ENCODE measurements at regions of chr16 and their contacts with region 1.

Region 1: GRCh38 chr16:29848420-29849297 is 14.4 kb downstream of the CDIPT start:
- H3K4me3 ChIP-seq: no peak overlapping the region
- H3K27ac ChIP-seq: no peak overlapping the region
- H3K4me1 ChIP-seq: no peaks in the 10 kb centered on the region
- CTCF ChIP-seq: peak; percentile 89

Region 2: DNA sequence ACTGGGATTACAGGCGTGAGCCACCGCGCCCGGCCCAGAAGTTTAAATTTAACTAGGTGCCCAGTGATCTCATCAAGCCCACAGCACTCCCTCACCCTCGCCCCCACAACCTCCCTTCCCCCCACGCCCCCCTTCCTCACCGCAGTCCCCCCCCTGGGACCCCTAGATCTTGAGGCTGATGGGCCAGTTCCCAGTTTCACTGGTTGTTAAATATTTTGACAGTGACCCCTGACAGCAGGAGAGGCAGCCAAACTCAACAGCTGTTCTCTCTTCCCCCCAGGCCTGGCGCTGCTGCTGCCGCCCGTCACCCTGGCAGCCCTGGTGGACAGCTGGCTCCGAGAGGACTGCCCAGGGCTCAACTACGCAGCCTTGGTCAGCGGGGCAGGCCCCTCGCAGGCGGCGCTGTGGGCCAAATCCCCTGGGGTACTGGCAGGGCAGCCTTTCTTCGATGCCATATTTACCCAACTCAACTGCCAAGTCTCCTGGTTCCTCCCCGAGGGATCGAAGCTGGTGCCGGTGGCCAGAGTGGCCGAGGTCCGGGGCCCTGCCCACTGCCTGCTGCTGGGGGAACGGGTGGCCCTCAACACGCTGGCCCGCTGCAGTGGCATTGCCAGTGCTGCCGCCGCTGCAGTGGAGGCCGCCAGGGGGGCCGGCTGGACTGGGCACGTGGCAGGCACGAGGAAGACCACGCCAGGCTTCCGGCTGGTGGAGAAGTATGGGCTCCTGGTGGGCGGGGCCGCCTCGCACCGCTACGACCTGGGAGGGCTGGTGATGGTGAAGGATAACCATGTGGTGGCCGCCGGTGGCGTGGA is 154.1 kb before region 1 on chr16:
- CTCF ChIA-PET with region 1: interaction called, 27 read pairs
- POLR2A ChIA-PET with region 1: no interaction called
- H3K4me3 ChIP-seq: no peak overlapping the region
- H3K27ac ChIP-seq: no peak overlapping the region
- H3K4me1 ChIP-seq: no peaks in the 10 kb centered on the region
- CTCF ChIP-seq: no peak

Region 3: DNA sequence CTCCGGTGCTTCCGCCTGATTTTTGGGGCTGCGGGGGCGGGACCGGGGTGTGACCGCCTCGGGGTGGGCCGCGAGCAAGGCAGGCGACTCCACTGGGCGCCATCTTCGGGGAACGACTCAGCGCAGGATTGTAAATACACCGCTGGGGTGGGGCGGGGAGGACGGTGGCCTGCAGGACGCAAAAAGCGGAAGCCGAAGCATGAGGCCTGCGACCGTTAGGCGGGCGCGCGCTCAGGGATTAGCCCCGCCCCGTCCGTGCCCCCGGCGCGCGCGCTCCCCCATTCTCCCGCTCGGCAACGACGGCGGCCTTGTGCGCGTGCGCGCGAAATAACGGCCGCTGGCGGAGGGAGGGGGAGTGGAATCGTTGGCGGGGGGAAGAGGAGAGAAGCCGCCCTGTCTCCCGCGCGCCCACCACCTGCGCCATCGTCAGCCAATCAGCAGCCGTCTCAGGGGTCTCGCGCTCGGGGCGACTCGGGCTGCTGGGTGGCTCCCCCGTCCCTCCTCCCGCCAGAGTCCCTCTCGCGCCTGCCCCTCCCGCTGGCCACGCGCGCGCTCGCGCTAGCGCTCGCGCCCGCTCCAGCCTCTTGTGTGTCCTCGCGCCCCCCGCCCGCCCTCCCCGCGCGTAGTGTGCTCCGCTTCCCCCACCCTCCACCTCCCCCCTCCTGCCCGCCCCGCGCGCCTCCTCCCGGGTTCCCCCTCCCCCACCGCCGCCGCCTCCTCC is 43.1 kb before region 1 on chr16:
- CTCF ChIA-PET with region 1: interaction called, 23 read pairs
- POLR2A ChIA-PET with region 1: interaction called, 8 read pairs
- H3K4me3 ChIP-seq: peak overlapping the region; percentile 53
- H3K27ac ChIP-seq: peak overlapping the region; percentile 100
- H3K4me1 ChIP-seq: peaks cover 13% of the 10 kb centered on the region
- CTCF ChIP-seq: peak; percentile 60

Region 4: GRCh38 chr16:29825145-29826044 is 23.3 kb before region 1 on chr16:
- CTCF ChIA-PET with region 1: interaction called, 74 read pairs
- POLR2A ChIA-PET with region 1: interaction called, 13 read pairs
- H3K4me3 ChIP-seq: no peak overlapping the region
- H3K27ac ChIP-seq: no peak overlapping the region
- H3K4me1 ChIP-seq: 0 out of 2 replicates have a peak, but pooled peaks cover 2% of the 10 kb centered on the region
- CTCF ChIP-seq: no peak

Region 5: GRCh38 chr16:29862374-29862883 is 13.8 kb after region 1 on chr16:
- CTCF ChIA-PET with region 1: interaction called, 58 read pairs
- POLR2A ChIA-PET with region 1: no interaction called
- H3K4me3 ChIP-seq: peak overlapping the region; percentile 95
- H3K27ac ChIP-seq: peak overlapping the region; percentile 93; the same call in 1 of the 2 replicates
- H3K4me1 ChIP-seq: no peaks in the 10 kb centered on the region
- CTCF ChIP-seq: peak; percentile 80

Region 6: DNA sequence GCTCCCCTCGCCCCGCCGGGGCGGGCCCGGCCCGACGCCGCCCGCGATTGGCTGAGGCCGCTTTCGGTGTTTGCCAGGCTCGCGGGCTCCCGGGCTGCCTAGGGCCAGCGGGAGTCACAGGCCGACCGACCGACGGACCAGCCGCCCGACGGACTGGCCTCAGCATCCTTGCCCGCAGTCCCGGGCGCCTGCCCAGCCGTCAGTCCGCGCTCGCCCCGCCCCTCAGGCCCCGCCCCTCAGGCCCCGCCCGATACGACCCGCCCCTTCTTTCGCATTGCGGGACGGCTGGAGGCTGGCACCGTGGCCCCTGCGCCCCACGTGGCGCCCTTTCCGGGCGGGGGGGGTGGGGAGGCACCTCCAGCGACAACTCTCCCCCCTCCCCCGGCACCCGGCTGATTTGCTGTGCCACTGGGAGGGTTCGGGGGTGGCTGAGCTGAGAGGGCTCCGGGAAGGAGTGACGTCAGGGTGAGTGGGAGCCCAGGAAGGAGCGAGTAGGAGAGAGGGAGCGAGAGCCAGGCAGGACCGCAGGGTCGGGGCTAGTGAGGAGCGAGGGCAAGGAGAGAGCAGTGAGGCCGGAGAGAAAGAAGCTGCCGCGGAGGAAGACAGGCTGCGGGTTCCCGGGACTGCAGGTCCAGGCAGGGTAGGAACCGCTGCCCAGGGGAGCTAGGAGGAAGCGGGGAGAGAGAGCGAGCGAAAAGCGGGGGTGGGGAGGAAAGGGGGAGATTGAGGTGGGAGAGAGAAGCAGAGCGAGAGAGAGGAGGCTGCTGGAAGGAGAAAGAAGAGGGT is 51.6 kb after region 1 on chr16 and contains the start of gene ASPHD1:
- CTCF ChIA-PET with region 1: interaction called, 10 read pairs
- POLR2A ChIA-PET with region 1: no interaction called
- H3K4me3 ChIP-seq: peak within 1 kb of the TSS; percentile 51
- H3K27ac ChIP-seq: no peak within 1 kb of the TSS
- H3K4me1 ChIP-seq: peaks cover 2% of the 10 kb centered on the region; the same call in 1 of the 2 replicates
- CTCF ChIP-seq: no peak

Region 7: GRCh38 chr16:29926005-29926710 is 77.5 kb after region 1 on chr16 and contains the start of gene KCTD13:
- CTCF ChIA-PET with region 1: no interaction called
- POLR2A ChIA-PET with region 1: no interaction called
- H3K4me3 ChIP-seq: peak within 1 kb of the TSS; percentile 97
- H3K27ac ChIP-seq: peak within 1 kb of the TSS; percentile 73
- H3K4me1 ChIP-seq: peaks cover 4% of the 10 kb centered on the region; the same call in 1 of the 2 replicates
- CTCF ChIP-seq: no peak; the same call in 1 of the 2 replicates

Region 8: DNA sequence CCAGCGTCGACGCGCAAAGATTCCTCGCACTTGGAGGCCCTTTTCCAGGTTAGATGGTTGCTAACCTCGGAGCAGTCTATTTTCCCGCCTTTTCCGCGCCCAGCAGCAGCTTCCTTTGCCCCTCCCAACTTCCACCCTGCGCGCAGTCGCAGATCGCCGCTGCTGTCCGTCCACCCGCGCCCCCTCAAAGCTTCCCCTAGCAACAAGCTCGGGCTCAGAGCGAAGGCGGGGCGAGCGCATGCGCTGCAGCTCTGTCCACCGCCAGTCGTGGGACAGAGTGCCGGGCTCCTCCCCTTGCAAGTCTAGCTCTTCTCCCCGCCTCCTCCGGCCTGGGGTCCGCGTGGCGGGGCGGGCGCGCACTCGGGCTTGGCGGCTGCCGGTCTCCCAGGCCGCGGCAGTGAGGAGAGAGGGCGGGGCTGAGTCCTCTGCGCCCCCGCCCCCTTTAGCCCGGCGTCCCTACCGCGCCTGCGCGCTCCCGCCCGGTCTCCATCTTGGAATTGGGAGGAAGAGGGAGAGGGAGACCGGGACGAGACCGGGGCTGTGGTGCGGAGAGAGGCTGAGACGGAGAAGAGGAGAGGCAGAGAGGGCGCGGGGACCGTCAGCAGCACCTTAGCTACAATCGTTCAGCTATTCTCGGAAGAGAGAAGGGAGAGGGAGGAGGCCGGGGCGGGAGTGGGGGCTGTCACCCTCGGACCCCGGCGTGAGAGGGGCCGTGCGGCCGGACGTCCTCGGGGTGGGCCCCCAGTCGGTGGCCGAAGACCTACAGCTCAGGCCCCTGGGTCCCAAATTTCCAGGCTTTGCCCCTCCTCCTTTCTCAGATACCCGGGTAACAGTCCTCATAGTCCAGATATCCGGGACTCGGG is 125.0 kb after region 1 on chr16 and contains the start of gene TAOK2:
- CTCF ChIA-PET with region 1: interaction called, 13 read pairs
- POLR2A ChIA-PET with region 1: interaction called, 5 read pairs
- H3K4me3 ChIP-seq: peak within 1 kb of the TSS; percentile 72
- H3K27ac ChIP-seq: peak within 1 kb of the TSS; percentile 76
- H3K4me1 ChIP-seq: peaks cover 8% of the 10 kb centered on the region
- CTCF ChIP-seq: no peak